Activated T-helper 2 cell treated with anti-CD3 and anti-CD28 coated beads, Interferon-gamma antibody, Interleukin-2, Interleukin-4, amounts not matched to agents 10 μg/mL and 5 μg/mL and 100 μg/mL, durations not matched to agents 14 hours and 24 hours and 36 hours (primary cell): ENCODE measurements at regions of chr11 and their contacts with region 1.

Region 1: GRCh38 chr11:1515082-1516060 is 28.8 kb upstream of the MOB2 start:
- DNase-seq: peak; percentile 53
- H3K4me3 Mint-ChIP-seq: no peak overlapping the region
- H3K27ac Mint-ChIP-seq: no peak overlapping the region
- H3K4me1 Mint-ChIP-seq: peaks cover 8% of the 10 kb centered on the region
- H3K27me3 Mint-ChIP-seq: no peaks in the 10 kb centered on the region

Region 2: GRCh38 chr11:1113405-1114201 is 401.8 kb before region 1 on chr11:
- intact Hi-C with region 1: loop called (anchors 10 kb)
- DNase-seq: no peak
- H3K4me3 Mint-ChIP-seq: no peak overlapping the region
- H3K27ac Mint-ChIP-seq: no peak overlapping the region
- H3K4me1 Mint-ChIP-seq: no peaks in the 10 kb centered on the region
- H3K27me3 Mint-ChIP-seq: no peaks in the 10 kb centered on the region

Region 3: DNA sequence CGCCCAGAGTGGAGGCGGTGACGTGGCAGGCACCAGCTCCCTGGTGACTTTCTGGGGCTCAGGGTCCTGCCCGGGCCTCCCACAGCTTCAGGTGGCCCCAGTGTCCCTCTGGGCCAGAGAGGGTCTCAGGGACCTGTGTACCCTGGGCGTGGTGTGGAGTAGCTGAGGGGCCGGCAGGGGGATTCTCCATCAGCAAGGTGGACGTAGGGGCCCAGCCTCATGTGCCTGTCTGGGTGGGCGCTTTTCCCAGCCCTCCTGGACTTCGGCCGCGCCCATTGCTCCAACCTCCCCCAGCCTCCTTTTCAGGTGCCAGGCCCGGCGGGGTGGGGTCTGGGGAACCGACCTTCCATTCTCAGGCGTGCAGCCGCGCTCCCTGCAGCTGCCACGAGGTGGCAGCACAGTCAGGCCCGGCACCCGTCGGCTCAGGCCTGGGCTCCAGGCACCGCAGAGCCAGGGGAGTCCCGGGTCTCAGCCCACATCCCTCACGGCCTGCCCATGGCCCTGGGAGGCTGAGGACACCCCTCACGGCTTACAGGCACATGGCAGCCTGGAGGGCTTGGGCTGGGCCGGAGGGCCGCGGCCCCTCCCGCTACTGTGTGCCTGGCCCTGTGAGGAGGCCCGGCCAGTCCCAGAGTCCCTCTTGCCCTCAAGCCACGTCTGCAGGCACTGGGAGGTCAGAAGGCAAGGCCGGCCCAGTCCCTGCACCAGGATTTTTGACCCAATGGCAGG is 312.4 kb before region 1 on chr11:
- intact Hi-C with region 1: loop called (anchors 5 kb)
- DNase-seq: peak; percentile 42
- H3K4me3 Mint-ChIP-seq: no peak overlapping the region
- H3K27ac Mint-ChIP-seq: no peak overlapping the region
- H3K4me1 Mint-ChIP-seq: no peaks in the 10 kb centered on the region
- H3K27me3 Mint-ChIP-seq: no peaks in the 10 kb centered on the region

Region 4: DNA sequence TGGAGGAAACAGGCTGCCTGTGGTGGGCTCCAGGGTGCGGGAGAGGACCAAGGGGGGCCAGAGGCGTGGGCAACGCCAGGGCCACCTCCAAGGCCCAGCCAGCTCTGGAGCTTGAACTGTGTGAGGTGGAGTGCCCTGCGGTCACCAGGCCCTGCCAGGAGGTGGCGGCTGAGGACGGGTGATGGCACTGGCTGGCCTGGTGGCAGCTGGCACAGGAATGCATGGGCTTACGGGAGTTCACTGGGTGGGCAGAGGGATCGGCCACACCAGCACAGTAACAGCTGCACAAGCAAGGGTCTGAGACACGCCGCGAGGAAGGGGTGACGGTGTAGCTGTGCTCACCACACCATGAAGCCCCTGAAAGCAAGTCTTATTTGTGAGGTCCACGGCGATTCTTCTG is 221.7 kb before region 1 on chr11:
- intact Hi-C with region 1: loop called (anchors 5 kb)
- DNase-seq: no peak
- H3K4me3 Mint-ChIP-seq: no peak overlapping the region
- H3K27ac Mint-ChIP-seq: no peak overlapping the region
- H3K4me1 Mint-ChIP-seq: no peaks in the 10 kb centered on the region
- H3K27me3 Mint-ChIP-seq: no peaks in the 10 kb centered on the region

Region 5: DNA sequence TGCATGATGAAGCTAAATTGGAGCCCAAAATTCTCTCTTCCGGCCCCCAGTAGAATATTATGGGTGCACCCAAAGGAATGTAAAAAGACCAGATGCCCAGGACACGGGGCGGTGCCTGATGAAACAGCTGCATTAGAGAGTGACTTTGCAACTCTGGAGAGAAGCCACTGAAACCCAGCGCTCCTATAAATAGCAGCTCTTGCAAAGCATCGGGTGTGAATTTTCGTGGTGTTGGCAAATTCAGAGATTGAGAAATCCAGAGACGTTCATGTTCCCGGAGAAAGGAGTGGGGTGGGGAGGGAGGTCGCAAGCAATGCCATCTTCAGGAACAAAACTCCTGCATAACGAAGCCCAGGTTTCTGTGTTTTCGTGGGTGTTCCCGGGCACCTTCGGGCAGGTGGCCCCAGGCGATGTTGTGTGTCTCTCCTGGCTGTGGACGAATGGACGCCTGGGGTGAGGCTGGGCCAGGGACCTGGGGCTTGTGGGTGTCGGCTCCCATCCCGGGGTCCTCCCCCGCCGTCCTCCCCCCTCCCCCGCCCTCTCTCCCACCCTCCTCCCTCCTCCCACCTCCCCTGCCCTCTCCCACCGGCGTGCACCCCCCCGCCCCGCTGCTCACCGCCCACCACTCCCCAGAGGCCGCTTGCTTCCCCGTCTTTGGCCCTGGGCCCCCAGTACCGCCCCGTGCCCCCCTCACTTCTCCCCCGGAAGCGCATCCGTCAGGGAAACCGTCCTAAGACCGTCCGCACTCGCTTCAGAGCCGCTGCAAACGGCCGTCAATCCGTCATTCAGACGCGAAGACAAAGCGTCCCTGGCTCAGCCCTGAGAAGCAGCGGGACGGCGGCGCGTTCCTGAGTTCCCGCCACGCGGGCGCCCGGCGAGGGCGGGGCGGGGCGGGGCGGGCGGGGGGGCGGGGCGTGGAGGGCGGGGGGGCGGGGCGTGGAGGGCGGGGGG is 179.3 kb before region 1 on chr11:
- intact Hi-C with region 1: loop called (anchors 10 kb)
- DNase-seq: peak; percentile 33
- H3K4me3 Mint-ChIP-seq: peak overlapping the region; percentile 69
- H3K27ac Mint-ChIP-seq: no peak overlapping the region
- H3K4me1 Mint-ChIP-seq: peaks cover 10% of the 10 kb centered on the region
- H3K27me3 Mint-ChIP-seq: peaks cover 12% of the 10 kb centered on the region

Region 6: GRCh38 chr11:1917671-1918516 is 402.5 kb after region 1 on chr11:
- intact Hi-C with region 1: no loop called
- DNase-seq: no peak
- H3K4me3 Mint-ChIP-seq: no peak overlapping the region
- H3K27ac Mint-ChIP-seq: no peak overlapping the region
- H3K4me1 Mint-ChIP-seq: peaks cover 7% of the 10 kb centered on the region
- H3K27me3 Mint-ChIP-seq: no peaks in the 10 kb centered on the region